ENCODE measurements at regions of chr19 and their contacts with region 1.

Region 1: DNA sequence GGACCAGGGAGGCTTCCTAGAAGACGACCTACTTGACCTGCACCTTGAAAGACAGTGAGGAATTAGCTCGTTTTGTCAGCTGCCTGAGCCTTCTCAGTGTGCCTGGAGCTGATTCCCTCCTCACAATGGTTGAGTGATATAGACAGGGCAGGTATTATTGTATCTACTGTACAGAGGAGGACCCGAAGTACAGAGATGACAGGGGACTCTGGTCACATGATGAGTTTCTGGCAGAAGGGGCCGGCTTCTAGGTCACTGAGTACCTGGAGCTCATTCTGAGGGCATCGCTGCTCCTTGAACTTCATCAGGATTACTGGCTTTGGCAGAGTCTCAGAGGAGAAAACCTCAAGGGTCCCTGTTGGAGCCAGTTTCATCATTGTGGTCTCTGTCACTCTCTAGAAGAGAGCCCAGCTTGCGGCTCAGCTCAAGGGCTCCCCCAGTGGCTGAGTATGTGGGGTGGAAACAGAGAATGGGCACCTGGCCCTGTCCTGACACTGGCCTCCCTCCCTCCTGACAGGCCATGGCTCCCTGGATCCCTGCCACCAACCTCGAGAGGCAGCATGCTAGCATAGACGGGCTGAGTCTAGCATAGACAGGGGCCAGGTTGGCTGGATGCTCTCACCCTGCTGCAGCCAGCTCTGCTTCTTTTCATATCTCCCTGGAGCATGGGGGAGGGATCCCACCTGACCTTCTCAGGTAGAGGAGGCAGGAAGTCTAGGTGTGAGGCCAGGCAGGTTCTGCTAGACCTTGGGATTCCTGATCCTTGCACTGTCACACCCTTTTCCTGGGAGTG is 38.7 kb downstream of the NFIX start:
- DNase-seq: peak in 1 of 2 experiments; percentile 69
- H3K4me3 ChIP-seq: no peak overlapping the region
- H3K27ac ChIP-seq: peak overlapping the region; percentile 20; the same call in 1 of the 2 replicates
- H3K4me1 ChIP-seq: peaks cover 64% of the 10 kb centered on the region
- H3K27me3 ChIP-seq: no peaks in the 10 kb centered on the region
- CTCF ChIP-seq: peak; percentile 83

Region 2: DNA sequence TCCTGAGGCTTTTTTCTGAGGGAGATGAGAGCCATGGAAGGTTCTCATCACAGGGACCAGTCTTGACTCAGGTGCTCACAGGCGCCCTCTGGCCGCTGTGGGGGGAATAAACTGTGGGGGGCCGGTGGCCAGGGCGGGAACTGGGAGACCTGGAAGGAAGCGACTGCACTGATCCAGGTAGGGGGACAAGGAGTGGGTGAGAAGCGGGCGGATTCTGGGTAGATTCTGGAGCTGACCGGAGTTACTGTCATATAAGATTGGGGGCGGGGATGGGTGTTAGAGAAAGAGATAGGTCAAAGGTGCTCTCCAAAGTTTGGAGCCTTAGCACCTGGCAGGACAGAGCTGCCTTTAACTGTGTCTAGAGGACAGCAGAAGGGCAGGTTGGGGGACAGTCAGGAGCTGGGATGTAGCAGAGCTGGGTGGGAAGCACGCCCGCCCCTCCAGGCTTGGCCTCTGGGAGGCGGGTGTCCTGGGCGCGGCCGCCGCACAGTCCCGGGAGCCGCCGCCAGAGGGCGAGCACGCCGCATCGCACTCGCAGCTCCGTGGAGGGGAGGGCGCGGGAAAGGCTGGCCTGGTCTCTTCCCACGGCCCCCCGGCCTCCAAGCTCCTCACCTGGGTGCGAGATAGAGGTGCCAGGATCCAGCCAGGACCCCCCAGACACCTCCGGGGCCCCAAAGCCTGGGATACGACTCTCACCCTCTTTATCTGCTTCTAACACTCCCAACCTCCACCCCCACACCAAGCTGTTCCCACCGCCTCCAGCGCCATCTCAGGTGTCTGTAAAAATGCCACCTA is 68.8 kb before region 1 on chr19:
- CTCF ChIA-PET with region 1: interaction called, 13 read pairs
- POLR2A ChIA-PET with region 1: no interaction called
- intact Hi-C with region 1: no loop called
- DNase-seq: peak; percentile 63 to 86
- H3K4me3 ChIP-seq: peak overlapping the region; percentile 58
- H3K27ac ChIP-seq: no peak overlapping the region
- H3K4me1 ChIP-seq: no peaks in the 10 kb centered on the region; the same call in 1 of the 2 replicates
- H3K27me3 ChIP-seq: no peaks in the 10 kb centered on the region
- CTCF ChIP-seq: peak; percentile 96

Region 3: DNA sequence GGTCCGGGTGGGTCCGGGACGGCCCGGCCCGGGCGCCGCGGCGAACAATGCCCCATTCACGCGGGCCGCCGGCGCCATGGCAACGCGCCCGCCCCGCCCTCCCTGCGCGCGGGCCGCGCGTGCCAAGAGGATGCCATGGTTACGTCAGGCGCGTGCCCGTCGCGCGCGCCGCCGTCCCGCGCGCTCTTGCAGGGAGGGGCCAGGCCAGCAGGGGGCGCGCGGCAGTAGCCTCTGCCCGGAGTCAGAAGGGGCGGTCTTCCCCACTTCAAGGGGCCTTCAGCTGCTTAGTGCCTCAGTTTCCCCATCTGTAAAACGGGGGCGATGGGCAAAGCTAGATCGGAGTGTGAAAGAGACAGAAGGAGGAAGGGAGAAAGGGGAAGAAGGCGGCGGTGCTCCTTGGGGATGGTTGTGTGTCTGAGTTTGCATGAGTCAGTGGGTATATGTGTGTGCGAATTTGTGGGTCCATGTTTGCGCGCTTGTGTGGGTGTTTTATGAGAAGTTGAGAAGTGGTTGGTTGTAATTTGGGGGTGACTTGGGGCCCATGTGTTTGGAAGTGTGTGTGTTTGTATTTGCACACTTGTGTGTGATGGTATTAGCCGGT is 50.4 kb before region 1 on chr19:
- CTCF ChIA-PET with region 1: interaction called, 3 read pairs
- POLR2A ChIA-PET with region 1: no interaction called
- intact Hi-C with region 1: loop called (anchors 1 kb)
- DNase-seq: peak in 1 of 2 experiments; percentile 78
- H3K4me3 ChIP-seq: no peak overlapping the region; the same call in 1 of the 2 replicates
- H3K27ac ChIP-seq: no peak overlapping the region
- H3K4me1 ChIP-seq: peaks cover 15% of the 10 kb centered on the region
- H3K27me3 ChIP-seq: peaks cover 19% of the 10 kb centered on the region
- CTCF ChIP-seq: peak; percentile 97

Region 4: DNA sequence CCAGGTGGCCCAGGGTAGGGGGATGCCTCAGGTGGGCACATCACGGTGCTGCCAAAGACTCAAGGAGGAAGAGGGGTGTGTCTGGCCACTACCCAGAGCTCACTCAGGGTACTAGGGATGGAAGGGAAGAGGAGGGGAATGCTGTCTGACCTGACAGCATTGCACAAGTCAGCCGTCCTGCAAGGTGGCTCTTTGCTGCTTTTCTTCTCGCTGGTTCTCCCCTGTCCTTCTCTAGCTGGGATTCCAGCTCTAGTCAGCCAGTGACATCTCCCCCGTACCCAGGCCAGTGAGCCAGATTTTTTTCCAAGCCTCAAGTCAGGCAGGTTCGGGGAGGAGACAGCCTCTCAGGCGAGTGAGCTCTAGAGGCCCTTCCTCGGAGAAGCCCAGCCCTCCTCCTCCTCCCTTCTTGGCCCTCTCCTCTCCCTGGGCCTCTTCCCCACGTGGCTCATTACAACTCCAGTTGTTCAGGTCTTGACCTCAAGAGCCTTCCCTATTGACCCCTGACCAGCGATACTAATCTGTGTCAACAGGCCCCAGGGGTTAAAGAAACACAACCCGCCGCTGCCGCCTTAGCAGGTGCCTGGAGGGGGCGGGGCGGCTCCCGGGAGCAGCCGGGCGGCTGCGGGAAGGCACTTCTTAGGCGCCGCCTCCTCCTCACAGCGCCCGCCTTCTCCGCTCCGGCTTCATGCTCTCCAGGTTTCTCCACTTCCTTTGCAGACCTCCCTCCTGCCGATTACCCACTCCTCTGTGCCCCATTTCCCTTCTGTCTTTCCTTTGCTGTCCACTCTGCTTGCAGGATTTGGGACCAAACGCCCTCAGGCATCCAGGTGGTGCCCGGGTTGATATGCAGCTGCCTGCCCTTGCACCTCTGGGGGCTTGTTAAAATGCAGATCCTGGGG is 17.5 kb after region 1 on chr19:
- CTCF ChIA-PET with region 1: interaction called, 7 read pairs
- POLR2A ChIA-PET with region 1: no interaction called
- intact Hi-C with region 1: loop called (anchors 1 kb)
- DNase-seq: peak; percentile 85 to 93
- H3K4me3 ChIP-seq: peak overlapping the region; percentile 39; the same call in 1 of the 2 replicates
- H3K27ac ChIP-seq: no peak overlapping the region
- H3K4me1 ChIP-seq: peaks cover 41% of the 10 kb centered on the region
- H3K27me3 ChIP-seq: peaks cover 53% of the 10 kb centered on the region
- CTCF ChIP-seq: no peak

Region 5: GRCh38 chr19:13060964-13061927 is 27.2 kb after region 1 on chr19:
- CTCF ChIA-PET with region 1: interaction called, 23 read pairs
- POLR2A ChIA-PET with region 1: no interaction called
- intact Hi-C with region 1: loop called (anchors 1 kb)
- DNase-seq: peak in 1 of 2 experiments; percentile 74
- H3K4me3 ChIP-seq: peak overlapping the region; percentile 44
- H3K27ac ChIP-seq: no peak overlapping the region
- H3K4me1 ChIP-seq: peaks cover 5% of the 10 kb centered on the region; the same call in 1 of the 2 replicates
- H3K27me3 ChIP-seq: peaks cover 46% of the 10 kb centered on the region
- CTCF ChIP-seq: peak; percentile 97

Region 6: GRCh38 chr19:13082192-13083007 is 48.4 kb after region 1 on chr19:
- CTCF ChIA-PET with region 1: no interaction called
- POLR2A ChIA-PET with region 1: no interaction called
- intact Hi-C with region 1: no loop called
- DNase-seq: no peak
- H3K4me3 ChIP-seq: no peak overlapping the region
- H3K27ac ChIP-seq: no peak overlapping the region
- H3K4me1 ChIP-seq: no peaks in the 10 kb centered on the region
- H3K27me3 ChIP-seq: no peaks in the 10 kb centered on the region
- CTCF ChIP-seq: peak; percentile 48; the same call in 1 of the 2 replicates

Region 7: DNA sequence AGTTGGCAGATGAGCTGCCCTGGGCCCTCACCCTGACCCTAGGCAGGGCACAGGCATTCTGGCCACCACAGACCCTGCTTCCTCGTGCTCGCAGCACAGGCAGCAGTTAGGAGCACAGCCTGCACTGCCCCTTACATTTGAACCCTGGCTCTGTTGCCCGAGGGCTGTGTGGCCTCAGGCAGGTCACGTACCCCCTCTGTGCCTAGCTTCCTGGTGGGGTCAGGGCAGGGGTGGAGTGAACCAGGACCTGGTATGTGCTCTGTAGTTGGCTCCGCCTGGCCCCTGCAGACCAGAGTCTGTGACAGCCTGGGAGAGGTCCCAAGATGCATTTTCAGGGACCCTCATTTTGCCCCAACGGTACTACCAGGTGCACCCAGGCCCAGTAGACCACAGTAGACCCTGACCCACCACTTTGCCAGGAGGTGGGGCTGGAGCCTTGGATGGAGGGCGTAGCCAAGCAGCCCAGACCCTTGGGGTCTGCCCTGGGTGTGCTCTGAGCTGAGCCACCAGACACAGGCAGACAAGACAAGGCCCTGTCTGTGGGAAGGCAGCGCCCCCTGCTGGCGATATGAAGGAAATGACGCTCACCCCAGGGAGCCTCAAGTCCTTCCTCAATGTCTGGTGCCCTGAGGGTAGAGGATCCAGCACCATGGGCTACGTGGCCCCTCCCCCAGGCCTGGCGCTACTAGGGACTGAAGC is 59.5 kb after region 1 on chr19:
- CTCF ChIA-PET with region 1: no interaction called
- POLR2A ChIA-PET with region 1: no interaction called
- intact Hi-C with region 1: no loop called
- DNase-seq: peak; percentile 75
- H3K4me3 ChIP-seq: no peak overlapping the region
- H3K27ac ChIP-seq: no peak overlapping the region
- H3K4me1 ChIP-seq: peaks cover 9% of the 10 kb centered on the region; the same call in 1 of the 2 replicates
- H3K27me3 ChIP-seq: no peaks in the 10 kb centered on the region
- CTCF ChIP-seq: peak; percentile 99

Region 8: GRCh38 chr19:13195678-13196077 is 161.7 kb after region 1 on chr19:
- CTCF ChIA-PET with region 1: no interaction called
- POLR2A ChIA-PET with region 1: no interaction called
- intact Hi-C with region 1: no loop called
- DNase-seq: peak; percentile 29 to 41
- H3K4me3 ChIP-seq: no peak overlapping the region
- H3K27ac ChIP-seq: no peak overlapping the region
- H3K4me1 ChIP-seq: peaks cover 8% of the 10 kb centered on the region
- H3K27me3 ChIP-seq: no peaks in the 10 kb centered on the region
- CTCF ChIP-seq: peak; percentile 50

Region 9: DNA sequence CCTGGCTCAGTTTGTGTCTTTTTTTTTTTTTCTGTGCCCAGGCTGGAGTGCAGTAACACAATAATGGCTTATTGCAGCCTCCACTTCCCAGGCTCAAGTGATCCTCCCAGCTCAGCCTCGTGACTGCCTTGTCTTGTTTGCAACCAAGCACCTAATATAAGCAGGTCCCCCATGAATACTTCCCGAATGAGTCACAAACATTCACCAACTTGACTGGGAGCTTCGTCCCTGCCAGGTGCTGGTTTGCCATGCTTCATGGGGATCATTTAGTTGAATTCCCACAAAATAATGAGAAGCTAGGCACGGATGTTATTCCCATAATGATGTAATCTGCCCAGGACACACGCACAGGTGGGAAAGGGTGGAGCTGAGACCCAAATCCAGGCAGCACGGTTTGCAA is 295.8 kb after region 1 on chr19:
- CTCF ChIA-PET with region 1: no interaction called
- POLR2A ChIA-PET with region 1: interaction called, 29 read pairs
- intact Hi-C with region 1: no loop called
- DNase-seq: peak in 1 of 2 experiments; percentile 43
- H3K4me3 ChIP-seq: no peak overlapping the region
- H3K27ac ChIP-seq: no peak overlapping the region
- H3K4me1 ChIP-seq: no peaks in the 10 kb centered on the region
- H3K27me3 ChIP-seq: peaks cover 98% of the 10 kb centered on the region
- CTCF ChIP-seq: no peak

Region 10: DNA sequence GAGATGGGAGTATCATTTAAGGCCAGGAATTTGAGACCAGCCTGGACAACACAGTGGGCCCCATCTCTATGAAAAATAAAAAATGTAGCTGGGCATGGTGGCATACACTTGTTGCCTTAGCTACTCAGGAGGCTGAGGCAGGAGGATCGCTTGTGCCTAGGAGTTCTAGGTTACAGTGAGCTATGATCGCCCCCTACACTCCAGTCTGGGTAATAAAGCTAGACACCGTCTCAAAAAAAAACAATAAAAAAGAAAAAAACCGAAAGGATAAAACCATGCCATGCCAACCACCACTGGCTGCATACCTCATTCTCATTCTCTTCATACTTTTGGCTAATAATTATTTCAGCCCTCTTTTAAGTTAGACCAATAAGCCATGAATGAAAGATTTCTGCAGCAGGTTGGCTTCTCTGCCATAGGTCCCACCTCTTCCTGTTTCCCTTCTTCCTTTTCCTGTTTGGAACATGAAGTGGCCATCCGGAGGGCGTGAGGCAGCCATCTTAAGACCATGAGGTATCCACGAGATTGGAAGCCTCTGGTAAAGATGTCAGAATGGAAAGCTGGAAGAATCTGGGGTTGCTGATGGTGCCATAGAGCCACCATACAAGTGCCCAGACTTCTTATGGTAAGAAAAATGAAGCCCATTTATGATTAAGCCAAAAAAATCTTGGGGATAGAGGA is 300.9 kb after region 1 on chr19:
- CTCF ChIA-PET with region 1: interaction called, 16 read pairs
- POLR2A ChIA-PET with region 1: no interaction called
- intact Hi-C with region 1: no loop called
- DNase-seq: peak in 1 of 2 experiments; percentile 32
- H3K4me3 ChIP-seq: no peak overlapping the region
- H3K27ac ChIP-seq: no peak overlapping the region
- H3K4me1 ChIP-seq: no peaks in the 10 kb centered on the region
- H3K27me3 ChIP-seq: peaks cover 98% of the 10 kb centered on the region
- CTCF ChIP-seq: no peak

Measured in PC-9 (cell line).